Spleen (tissue), 13 donors: ENCODE measurements at regions of chr19 and their contacts with region 1.

Region 1: GRCh38 chr19:11035441-11036377 is 53.6 kb upstream of the LDLR start:
- DNase-seq: peak; percentile 96
- H3K4me3 ChIP-seq: no peak overlapping the region
- H3K27ac ChIP-seq: peak overlapping the region in 4 of 8 donors; percentile 10 to 67 (median 22)
- H3K4me1 ChIP-seq: peaks cover 5 to 20% (median 11%) of the 10 kb centered on the region in 6 donors
- H3K27me3 ChIP-seq: no peaks in the 10 kb centered on the region
- CTCF ChIP-seq: peak; percentile 81 to 96 (median 92)
- POLR2A ChIP-seq: no peak

Region 2: GRCh38 chr19:10975374-10976130 is 60.2 kb before region 1 on chr19:
- intact Hi-C with region 1: no loop called
- DNase-seq: no peak
- H3K4me3 ChIP-seq: no peak overlapping the region
- H3K27ac ChIP-seq: peak overlapping the region in 7 of 8 donors; percentile 36 to 74 (median 61)
- H3K4me1 ChIP-seq: peaks cover 0 to 93% (median 46%) of the 10 kb centered on the region in 6 donors
- H3K27me3 ChIP-seq: no peaks in the 10 kb centered on the region
- CTCF ChIP-seq: no peak
- POLR2A ChIP-seq: no peak

Region 3: GRCh38 chr19:11078893-11079292 is 43.2 kb after region 1 on chr19:
- intact Hi-C with region 1: no loop called
- DNase-seq: no peak
- H3K4me3 ChIP-seq: no peak overlapping the region
- H3K27ac ChIP-seq: no peak overlapping the region
- H3K4me1 ChIP-seq: peaks cover 5 to 33% (median 23%) of the 10 kb centered on the region in 6 donors
- H3K27me3 ChIP-seq: no peaks in the 10 kb centered on the region
- CTCF ChIP-seq: no peak
- POLR2A ChIP-seq: no peak

Region 4: GRCh38 chr19:11125994-11126685 is 90.4 kb after region 1 on chr19:
- intact Hi-C with region 1: loop called (anchors 5 kb)
- DNase-seq: peak; percentile 93
- H3K4me3 ChIP-seq: no peak overlapping the region
- H3K27ac ChIP-seq: no peak overlapping the region
- H3K4me1 ChIP-seq: peaks cover 6 to 21% (median 16%) of the 10 kb centered on the region in 6 donors
- H3K27me3 ChIP-seq: no peaks in the 10 kb centered on the region
- CTCF ChIP-seq: peak; percentile 21 to 85 (median 76)
- POLR2A ChIP-seq: no peak

Region 5: GRCh38 chr19:11155373-11156120 is 119.8 kb after region 1 on chr19 and contains the start of gene SPC24:
- intact Hi-C with region 1: no loop called
- DNase-seq: peak; percentile 97
- H3K4me3 ChIP-seq: peak within 1 kb of the TSS; percentile 32 to 87 (median 56)
- H3K27ac ChIP-seq: peak within 1 kb of the TSS in 7 of 8 donors; percentile 25 to 83 (median 71)
- H3K4me1 ChIP-seq: peaks cover 10 to 44% (median 18%) of the 10 kb centered on the region in 6 donors
- H3K27me3 ChIP-seq: no peaks in the 10 kb centered on the region
- CTCF ChIP-seq: peak in 1 of 11 experiments; percentile 20
- POLR2A ChIP-seq: no peak
- total RNA-seq, gene SPC24: 2.0 to 9.7 (median 3.6) TPM